Thyroid gland (tissue), 4 donors: ENCODE measurements at regions of chr15 and their contacts with region 1.

Region 1: GRCh38 chr15:33021806-33022389 is 172.6 kb downstream of the FMN1 start:
- DNase-seq: peak in 1 of 2 donors; percentile 23
- H3K4me3 ChIP-seq: no peak overlapping the region
- H3K27ac ChIP-seq: peak overlapping the region; percentile 79 to 90 (median 84)
- H3K4me1 ChIP-seq: peaks cover 14 to 26% of the 10 kb centered on the region in 2 donors
- H3K27me3 ChIP-seq: no peaks in the 10 kb centered on the region
- CTCF ChIP-seq: peak in 5 of 6 experiments; percentile 20 to 87 (median 72)
- POLR2A ChIP-seq: no peak

Region 2: DNA sequence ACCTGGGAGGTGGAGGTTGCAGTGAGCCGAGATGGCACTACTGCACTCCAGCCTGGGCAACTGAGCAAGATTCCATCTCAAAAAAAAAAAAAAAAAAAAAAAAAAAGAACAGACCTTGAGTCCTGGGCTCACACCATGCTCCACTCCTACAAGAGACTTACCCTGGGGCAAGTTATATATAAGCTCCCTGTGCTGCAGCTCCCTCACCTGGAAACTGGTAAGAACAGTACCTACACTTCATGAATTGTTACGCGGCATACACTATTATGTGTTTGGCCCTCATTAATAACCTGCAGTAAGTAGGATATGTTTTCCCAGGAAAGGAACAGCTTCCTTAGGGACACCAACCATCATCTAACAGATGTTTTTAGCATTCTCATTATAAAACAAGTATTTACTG is 53.0 kb after region 1 on chr15:
- intact Hi-C with region 1: loop called (anchors 10 kb)
- DNase-seq: peak; percentile 16 to 18
- H3K4me3 ChIP-seq: no peak overlapping the region
- H3K27ac ChIP-seq: no peak overlapping the region
- H3K4me1 ChIP-seq: peaks cover 11 to 12% of the 10 kb centered on the region in 2 donors
- H3K27me3 ChIP-seq: no peaks in the 10 kb centered on the region
- CTCF ChIP-seq: peak in 4 of 6 experiments; percentile 22 to 39 (median 32)
- POLR2A ChIP-seq: no peak

Region 3: GRCh38 chr15:33132722-33133345 is 110.9 kb after region 1 on chr15:
- intact Hi-C with region 1: loop called (anchors 5 kb)
- DNase-seq: peak; percentile 40 to 45
- H3K4me3 ChIP-seq: no peak overlapping the region
- H3K27ac ChIP-seq: no peak overlapping the region
- H3K4me1 ChIP-seq: peaks cover 9 to 23% of the 10 kb centered on the region in 2 donors
- H3K27me3 ChIP-seq: no peaks in the 10 kb centered on the region
- CTCF ChIP-seq: peak; percentile 30 to 76 (median 60)
- POLR2A ChIP-seq: no peak

Region 4: DNA sequence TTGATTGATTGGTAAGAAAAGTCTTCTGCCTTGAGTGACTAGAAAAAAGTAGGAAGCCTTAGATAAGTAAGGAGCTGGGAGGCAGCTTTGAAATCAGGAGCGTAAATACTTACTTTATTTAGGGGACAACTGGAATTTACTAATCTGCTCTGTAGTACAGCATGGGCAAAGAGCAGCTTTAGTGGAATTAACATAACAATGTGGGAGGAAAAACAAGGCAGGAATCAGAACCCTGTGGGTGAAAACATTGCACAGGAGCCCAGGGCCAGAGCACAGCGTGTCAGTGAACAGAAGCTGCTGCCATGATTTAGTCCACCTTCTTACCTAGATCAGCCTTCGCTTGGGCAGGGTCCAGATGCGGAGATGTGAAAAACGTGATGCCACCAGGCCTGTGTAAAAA is 158.0 kb after region 1 on chr15:
- intact Hi-C with region 1: no loop called
- DNase-seq: no peak
- H3K4me3 ChIP-seq: no peak overlapping the region
- H3K27ac ChIP-seq: no peak overlapping the region
- H3K4me1 ChIP-seq: no peaks in the 10 kb centered on the region
- H3K27me3 ChIP-seq: no peaks in the 10 kb centered on the region
- CTCF ChIP-seq: no peak
- POLR2A ChIP-seq: no peak